ENCODE measurements at regions of chr2 and their contacts with region 1.

Region 1: DNA sequence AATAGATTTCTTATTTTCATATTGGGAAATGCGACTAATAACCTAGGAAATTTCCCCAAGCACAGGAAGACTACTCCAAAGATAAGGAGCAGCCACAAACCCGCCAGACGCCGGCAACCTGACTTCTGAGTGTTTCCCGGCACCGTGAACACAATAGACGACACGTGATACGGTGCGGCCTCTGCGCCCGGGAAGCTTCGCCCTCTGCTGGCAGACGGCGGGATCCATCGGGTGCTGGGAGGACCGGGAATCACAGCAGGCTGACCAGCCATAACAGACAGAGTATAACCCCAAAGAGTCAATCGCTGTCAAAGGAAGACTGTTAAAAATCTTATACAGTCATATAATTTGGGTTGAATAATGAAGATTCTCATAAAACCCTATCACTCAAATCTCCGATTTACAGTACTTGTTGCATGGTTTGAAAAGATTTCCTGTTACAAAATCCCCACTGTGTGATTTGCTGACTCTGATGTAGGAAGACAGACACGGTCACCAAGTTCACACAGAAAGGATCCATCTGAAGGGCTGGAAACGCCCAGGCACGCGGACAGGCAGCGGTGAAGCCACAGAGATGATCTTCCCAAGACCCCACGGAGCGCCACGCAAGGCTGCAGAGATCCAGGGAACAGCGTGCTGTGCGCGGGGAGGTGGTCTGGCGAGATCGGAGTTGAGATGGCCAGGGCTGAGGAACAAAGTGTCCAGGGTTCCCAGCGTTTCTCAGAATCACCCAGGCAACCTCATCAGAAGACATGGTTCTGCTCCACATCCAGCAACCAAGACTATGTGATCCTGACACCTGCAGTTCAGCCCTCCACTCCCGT is 73.8 kb downstream of the EIPR1 start:
- DNase-seq: peak; percentile 7
- ATAC-seq: peak; percentile 100
- H3K4me3 ChIP-seq: no peak overlapping the region
- H3K27ac ChIP-seq: no peak overlapping the region
- H3K4me1 ChIP-seq: peaks cover 3% of the 10 kb centered on the region; the same call in 1 of the 2 replicates
- H3K27me3 ChIP-seq: no peaks in the 10 kb centered on the region
- CTCF ChIP-seq: peak; percentile 91 to 97 (median 92); a peak in 5 of 6 replicates
- EP300 ChIP-seq: no peak
- POLR2A ChIP-seq: no peak
- RAD21 ChIP-seq: peak; percentile 90

Region 2: GRCh38 chr2:2843969-2844548 is 459.7 kb before region 1 on chr2:
- CTCF ChIA-PET with region 1: interaction called, 3 read pairs
- POLR2A ChIA-PET with region 1: no interaction called
- RAD21 ChIA-PET with region 1: no interaction called
- SMC1A ChIA-PET with region 1: no interaction called
- in situ Hi-C with region 1: no loop called
- intact Hi-C with region 1: loop called (anchors 1 kb)
- DNase-seq: no peak
- ATAC-seq: no peak; the same call in 2 of the 3 replicates
- H3K4me3 ChIP-seq: no peak overlapping the region
- H3K27ac ChIP-seq: no peak overlapping the region
- H3K4me1 ChIP-seq: no peaks in the 10 kb centered on the region
- H3K27me3 ChIP-seq: no peaks in the 10 kb centered on the region; a peak in 1 of 4 replicates
- CTCF ChIP-seq: peak; percentile 30 to 52 (median 40); a peak in 5 of 6 replicates
- EP300 ChIP-seq: no peak
- POLR2A ChIP-seq: no peak
- RAD21 ChIP-seq: peak; percentile 55

Region 3: DNA sequence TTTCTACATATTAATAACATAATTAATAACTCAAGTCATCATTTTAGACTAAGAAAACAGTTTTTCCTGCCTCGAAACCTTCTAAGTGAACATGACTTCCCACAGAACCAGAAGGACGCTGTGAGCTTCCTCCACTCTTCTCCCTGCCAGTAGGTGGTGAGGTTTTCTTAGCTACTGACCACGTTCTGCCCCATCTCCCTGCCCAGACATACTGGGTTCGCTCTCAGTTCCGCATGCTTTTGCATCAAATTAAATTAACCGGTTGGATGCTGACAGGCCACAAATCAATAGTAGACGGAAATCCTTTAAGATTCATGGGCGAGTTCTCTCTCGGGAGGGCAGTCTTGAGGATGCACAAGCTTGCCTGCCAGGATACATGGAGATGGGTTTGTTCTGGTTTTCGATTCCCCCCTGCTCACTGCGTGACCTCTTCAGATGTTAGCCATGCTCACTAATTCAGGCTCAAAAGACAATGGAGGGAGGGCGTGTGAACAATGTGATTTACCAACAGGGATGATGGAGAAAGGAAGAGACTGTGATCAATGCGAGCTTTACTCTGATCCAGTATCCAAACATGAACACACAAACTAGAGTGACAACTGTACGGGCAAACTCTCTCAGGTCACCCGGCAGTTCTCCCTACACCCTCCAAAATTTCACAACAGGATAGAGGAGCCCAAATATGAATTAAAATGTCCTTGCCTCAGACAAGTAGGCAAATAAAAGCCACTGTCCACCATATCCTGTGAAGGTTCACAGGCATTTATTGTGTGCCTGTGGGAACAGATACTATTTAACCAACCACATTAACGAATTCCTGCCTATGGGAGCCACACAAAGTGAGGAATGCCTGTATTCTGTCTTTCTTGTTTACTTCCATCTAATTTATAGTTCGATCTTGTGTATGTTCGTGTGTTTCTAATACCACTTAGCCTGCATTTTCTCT is 301.9 kb before region 1 on chr2:
- CTCF ChIA-PET with region 1: no interaction called
- POLR2A ChIA-PET with region 1: no interaction called
- RAD21 ChIA-PET with region 1: no interaction called
- SMC1A ChIA-PET with region 1: no interaction called
- in situ Hi-C with region 1: no loop called
- intact Hi-C with region 1: loop called (anchors 2 kb)
- DNase-seq: no peak
- ATAC-seq: peak; percentile 62
- H3K4me3 ChIP-seq: no peak overlapping the region
- H3K27ac ChIP-seq: no peak overlapping the region
- H3K4me1 ChIP-seq: no peaks in the 10 kb centered on the region
- H3K27me3 ChIP-seq: no peaks in the 10 kb centered on the region
- CTCF ChIP-seq: peak; percentile 19 to 42 (median 30); a peak in 3 of 6 replicates
- EP300 ChIP-seq: no peak
- POLR2A ChIP-seq: no peak
- RAD21 ChIP-seq: peak; percentile 25; the same call in 1 of the 2 replicates

Region 4: DNA sequence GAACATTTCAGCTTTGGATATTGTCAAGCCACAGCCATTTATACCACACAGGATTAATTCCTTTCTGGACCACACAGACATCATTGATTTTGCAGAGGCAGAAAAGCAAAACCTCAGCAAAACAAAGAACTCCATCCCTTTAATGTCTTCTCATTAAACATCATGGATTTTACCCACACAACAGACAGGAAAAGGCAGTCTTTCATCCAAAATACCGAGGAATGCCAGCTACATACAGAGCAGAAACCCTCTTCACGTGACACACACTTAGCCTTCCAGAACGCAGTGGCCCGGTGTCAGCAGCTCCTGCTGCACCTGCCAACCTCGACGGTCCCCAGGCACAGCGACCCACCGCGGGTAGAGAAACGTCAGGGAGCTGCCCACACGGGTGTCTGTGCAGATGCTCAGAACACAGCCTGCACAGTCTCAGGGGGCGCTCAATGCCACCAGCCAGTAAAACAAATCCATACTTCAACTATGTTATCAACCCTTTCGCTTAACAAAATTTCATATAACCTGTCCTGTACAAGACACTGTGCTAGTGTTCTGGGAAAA is 230.7 kb before region 1 on chr2:
- CTCF ChIA-PET with region 1: no interaction called
- POLR2A ChIA-PET with region 1: no interaction called
- RAD21 ChIA-PET with region 1: no interaction called
- SMC1A ChIA-PET with region 1: no interaction called
- in situ Hi-C with region 1: no loop called
- intact Hi-C with region 1: loop called (anchors 5 kb)
- DNase-seq: no peak
- ATAC-seq: no peak
- H3K4me3 ChIP-seq: no peak overlapping the region
- H3K27ac ChIP-seq: no peak overlapping the region
- H3K4me1 ChIP-seq: no peaks in the 10 kb centered on the region
- H3K27me3 ChIP-seq: peaks cover 0 to 1% of the 10 kb centered on the region in 2 experiments; a peak in 1 of 4 replicates
- CTCF ChIP-seq: no peak
- EP300 ChIP-seq: no peak
- POLR2A ChIP-seq: no peak
- RAD21 ChIP-seq: no peak

Region 5: GRCh38 chr2:3179208-3179607 is 124.6 kb before region 1 on chr2:
- CTCF ChIA-PET with region 1: no interaction called
- POLR2A ChIA-PET with region 1: no interaction called
- RAD21 ChIA-PET with region 1: no interaction called
- SMC1A ChIA-PET with region 1: no interaction called
- in situ Hi-C with region 1: no loop called
- intact Hi-C with region 1: no loop called
- DNase-seq: no peak
- ATAC-seq: peak; percentile 30; the same call in 1 of the 3 replicates
- H3K4me3 ChIP-seq: no peak overlapping the region
- H3K27ac ChIP-seq: no peak overlapping the region
- H3K4me1 ChIP-seq: no peaks in the 10 kb centered on the region
- H3K27me3 ChIP-seq: no peaks in the 10 kb centered on the region
- CTCF ChIP-seq: peak; percentile 19 to 32 (median 26); a peak in 2 of 6 replicates
- EP300 ChIP-seq: no peak
- POLR2A ChIP-seq: no peak
- RAD21 ChIP-seq: no peak; the same call in 1 of the 2 replicates

Region 6: DNA sequence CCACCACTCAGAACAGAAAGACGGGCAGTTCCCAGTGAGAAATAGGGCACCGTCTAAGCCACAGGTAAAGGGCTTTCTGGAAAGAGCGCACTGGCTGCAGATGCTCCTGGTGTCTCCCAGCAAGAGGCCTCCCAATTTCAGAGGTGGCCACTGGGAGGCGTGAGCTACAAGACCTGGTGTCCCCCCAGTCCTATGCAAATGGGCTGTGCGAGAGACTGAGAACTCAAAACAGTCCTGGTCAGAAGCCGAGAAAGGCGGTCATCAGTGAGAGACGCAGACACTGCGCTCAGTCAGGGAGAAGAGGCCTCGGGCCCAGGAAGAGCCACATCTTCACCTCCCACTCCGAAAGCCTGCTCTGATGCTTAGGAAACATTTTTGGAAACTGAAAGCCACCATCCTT is 105.7 kb before region 1 on chr2:
- CTCF ChIA-PET with region 1: interaction called, 4 read pairs
- POLR2A ChIA-PET with region 1: no interaction called
- RAD21 ChIA-PET with region 1: no interaction called
- SMC1A ChIA-PET with region 1: no interaction called
- in situ Hi-C with region 1: no loop called
- intact Hi-C with region 1: loop called (anchors 2 kb)
- DNase-seq: no peak
- ATAC-seq: peak; percentile 72
- H3K4me3 ChIP-seq: no peak overlapping the region
- H3K27ac ChIP-seq: no peak overlapping the region
- H3K4me1 ChIP-seq: no peaks in the 10 kb centered on the region
- H3K27me3 ChIP-seq: no peaks in the 10 kb centered on the region
- CTCF ChIP-seq: peak; percentile 30 to 40 (median 32); a peak in 5 of 6 replicates
- EP300 ChIP-seq: no peak
- POLR2A ChIP-seq: no peak
- RAD21 ChIP-seq: peak; percentile 52

Region 7: DNA sequence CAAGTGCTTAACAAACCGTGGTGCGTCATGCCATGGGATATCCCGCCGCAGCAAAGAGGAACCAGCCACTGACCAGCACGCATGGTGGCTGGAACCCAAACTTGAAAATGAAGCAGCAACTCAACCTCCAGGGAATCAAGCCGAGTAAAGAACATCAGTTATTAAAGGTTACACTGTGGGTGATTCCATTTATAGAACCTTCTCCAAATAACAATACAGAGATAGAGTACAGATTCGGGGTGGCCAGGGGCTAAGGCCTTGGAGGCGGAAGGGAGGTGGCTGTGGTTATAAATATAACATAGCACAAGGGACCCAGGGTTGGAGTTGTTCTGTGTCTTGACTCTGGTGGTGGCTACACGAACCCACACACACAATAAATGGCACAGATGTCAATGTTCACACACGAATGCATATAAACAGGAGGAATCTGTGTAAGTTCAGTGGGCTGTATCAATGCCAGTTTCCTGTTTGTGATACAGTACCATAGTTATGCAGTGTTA is 49.3 kb before region 1 on chr2:
- CTCF ChIA-PET with region 1: no interaction called
- POLR2A ChIA-PET with region 1: no interaction called
- RAD21 ChIA-PET with region 1: no interaction called
- SMC1A ChIA-PET with region 1: no interaction called
- in situ Hi-C with region 1: no loop called
- intact Hi-C with region 1: loop called (anchors 1 kb)
- DNase-seq: peak; percentile 39
- ATAC-seq: peak; percentile 88
- H3K4me3 ChIP-seq: no peak overlapping the region
- H3K27ac ChIP-seq: peak overlapping the region; percentile 69
- H3K4me1 ChIP-seq: peaks cover 16% of the 10 kb centered on the region
- H3K27me3 ChIP-seq: no peaks in the 10 kb centered on the region
- CTCF ChIP-seq: no peak
- EP300 ChIP-seq: peak; percentile 87 to 96; a peak in 2 of 4 replicates
- POLR2A ChIP-seq: no peak
- RAD21 ChIP-seq: no peak

Region 8: GRCh38 chr2:3265981-3266924 is 37.5 kb before region 1 on chr2:
- CTCF ChIA-PET with region 1: no interaction called
- POLR2A ChIA-PET with region 1: no interaction called
- RAD21 ChIA-PET with region 1: no interaction called
- SMC1A ChIA-PET with region 1: no interaction called
- in situ Hi-C with region 1: no loop called
- intact Hi-C with region 1: no loop called
- DNase-seq: no peak
- ATAC-seq: no peak
- H3K4me3 ChIP-seq: no peak overlapping the region
- H3K27ac ChIP-seq: no peak overlapping the region
- H3K4me1 ChIP-seq: no peaks in the 10 kb centered on the region
- H3K27me3 ChIP-seq: no peaks in the 10 kb centered on the region
- CTCF ChIP-seq: no peak
- EP300 ChIP-seq: no peak
- POLR2A ChIP-seq: no peak
- RAD21 ChIP-seq: no peak

Region 9: GRCh38 chr2:3493615-3494007 is 189.8 kb after region 1 on chr2:
- CTCF ChIA-PET with region 1: no interaction called
- POLR2A ChIA-PET with region 1: no interaction called
- RAD21 ChIA-PET with region 1: no interaction called
- SMC1A ChIA-PET with region 1: no interaction called
- in situ Hi-C with region 1: no loop called
- intact Hi-C with region 1: no loop called
- DNase-seq: no peak
- ATAC-seq: peak; percentile 50; the same call in 2 of the 3 replicates
- H3K4me3 ChIP-seq: no peak overlapping the region
- H3K27ac ChIP-seq: no peak overlapping the region
- H3K4me1 ChIP-seq: no peaks in the 10 kb centered on the region
- H3K27me3 ChIP-seq: no peaks in the 10 kb centered on the region
- CTCF ChIP-seq: no peak
- EP300 ChIP-seq: no peak
- POLR2A ChIP-seq: no peak
- RAD21 ChIP-seq: no peak

Measured in GM12878 (cell line).